Naive thymus-derived CD4-positive, alpha-beta T cell (primary cell): ENCODE measurements at regions of chr10 and their contacts with region 1.

Region 1: GRCh38 chr10:104935656-104936055 is 294.6 kb downstream of the SORCS3 start:
- DNase-seq: peak in 7 of 9 donors; percentile 19 to 78 (median 56)
- ATAC-seq: peak; percentile 89
- H3K4me3 ChIP-seq: no peak overlapping the region
- H3K4me3 Mint-ChIP-seq: peak overlapping the region in 9 of 10 donors; percentile 48 to 86 (median 74)
- H3K27ac ChIP-seq: no peak overlapping the region
- H3K27ac Mint-ChIP-seq: peak overlapping the region in 7 of 9 donors; percentile 33 to 80 (median 41)
- H3K4me1 ChIP-seq: peaks cover 0 to 56% of the 10 kb centered on the region in 2 donors
- H3K4me1 Mint-ChIP-seq: peaks cover 0 to 85% (median 61%) of the 10 kb centered on the region in 7 donors
- H3K27me3 ChIP-seq: no peaks in the 10 kb centered on the region
- H3K27me3 Mint-ChIP-seq: no peaks in the 10 kb centered on the region

Region 2: DNA sequence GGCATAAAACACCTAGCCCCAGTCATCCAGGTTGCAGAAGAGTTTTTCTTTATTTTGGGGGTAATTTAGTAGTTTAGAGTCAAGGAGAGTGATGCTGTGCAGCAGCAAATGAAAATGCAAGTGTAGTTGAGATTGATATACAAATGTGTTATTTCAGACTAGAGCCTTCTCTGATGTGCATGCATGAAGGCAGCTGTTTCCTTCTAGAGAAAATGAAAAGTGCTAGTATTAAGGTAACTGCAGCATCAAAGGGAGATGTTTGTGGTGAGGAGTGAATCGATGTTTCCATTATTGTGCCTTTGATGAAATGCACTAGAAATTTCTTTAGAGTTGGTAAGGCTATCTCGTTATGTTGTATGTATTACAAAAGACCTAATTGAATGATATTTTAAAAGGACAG is 44.7 kb after region 1 on chr10:
- CTCF ChIA-PET with region 1: no interaction called
- POLR2A ChIA-PET with region 1: interaction called, 4 read pairs
- intact Hi-C with region 1: loop called in 1 of 2 experiments (anchors 2 kb)
- DNase-seq: peak in 4 of 9 donors; percentile 10 to 44 (median 27)
- ATAC-seq: no peak
- H3K4me3 ChIP-seq: no peak overlapping the region
- H3K4me3 Mint-ChIP-seq: peak overlapping the region in 6 of 10 donors; percentile 2 to 69 (median 56)
- H3K27ac ChIP-seq: no peak overlapping the region
- H3K27ac Mint-ChIP-seq: peak overlapping the region in 5 of 9 donors; percentile 18 to 81 (median 61)
- H3K4me1 ChIP-seq: peaks cover 0 to 19% of the 10 kb centered on the region in 2 donors
- H3K4me1 Mint-ChIP-seq: peaks cover 0 to 44% (median 34%) of the 10 kb centered on the region in 7 donors
- H3K27me3 ChIP-seq: no peaks in the 10 kb centered on the region
- H3K27me3 Mint-ChIP-seq: no peaks in the 10 kb centered on the region